ENCODE measurements at regions of chr7 and their contacts with region 1.

Region 1: GRCh38 chr7:156751319-156751718 is 110.7 kb downstream of the RNF32 start:
- DNase-seq: peak; percentile 44
- H3K4me3 Mint-ChIP-seq: peak overlapping the region; percentile 16
- H3K27ac Mint-ChIP-seq: no peak overlapping the region
- H3K4me1 Mint-ChIP-seq: peaks cover 16% of the 10 kb centered on the region
- H3K27me3 Mint-ChIP-seq: no peaks in the 10 kb centered on the region

Region 2: GRCh38 chr7:155961241-155962190 is 789.8 kb before region 1 on chr7:
- intact Hi-C with region 1: loop called (anchors 5 kb)
- DNase-seq: no peak
- H3K4me3 Mint-ChIP-seq: no peak overlapping the region
- H3K27ac Mint-ChIP-seq: no peak overlapping the region
- H3K4me1 Mint-ChIP-seq: peaks cover 20% of the 10 kb centered on the region
- H3K27me3 Mint-ChIP-seq: peaks cover 10% of the 10 kb centered on the region

Region 3: DNA sequence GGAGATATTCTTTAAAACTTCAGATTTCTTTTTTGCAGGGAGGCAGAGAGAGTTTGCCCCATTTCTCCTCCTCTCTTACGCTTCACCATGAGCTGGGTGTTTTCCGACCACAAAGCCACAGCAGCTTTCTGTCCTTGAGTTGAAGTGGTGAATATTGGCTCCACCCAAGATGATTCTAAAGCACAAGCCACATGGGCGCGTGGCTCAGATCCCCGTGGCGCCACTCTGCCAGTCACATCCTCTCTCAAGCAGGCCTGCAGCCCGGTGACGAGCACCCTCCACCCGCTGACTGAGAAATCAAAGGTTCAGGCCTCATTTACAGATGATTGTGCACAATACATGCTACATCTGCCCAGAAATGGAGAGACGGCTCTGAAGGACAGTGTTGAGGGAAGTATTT is 138.4 kb before region 1 on chr7:
- intact Hi-C with region 1: loop called (anchors 2 kb)
- DNase-seq: peak; percentile 82
- H3K4me3 Mint-ChIP-seq: peak overlapping the region; percentile 63
- H3K27ac Mint-ChIP-seq: peak overlapping the region; percentile 25
- H3K4me1 Mint-ChIP-seq: peaks cover 37% of the 10 kb centered on the region
- H3K27me3 Mint-ChIP-seq: peaks cover 56% of the 10 kb centered on the region

Region 4: GRCh38 chr7:156725077-156725476 is 26.2 kb before region 1 on chr7:
- intact Hi-C with region 1: no loop called
- DNase-seq: no peak
- H3K4me3 Mint-ChIP-seq: no peak overlapping the region
- H3K27ac Mint-ChIP-seq: no peak overlapping the region
- H3K4me1 Mint-ChIP-seq: no peaks in the 10 kb centered on the region
- H3K27me3 Mint-ChIP-seq: no peaks in the 10 kb centered on the region

Region 5: DNA sequence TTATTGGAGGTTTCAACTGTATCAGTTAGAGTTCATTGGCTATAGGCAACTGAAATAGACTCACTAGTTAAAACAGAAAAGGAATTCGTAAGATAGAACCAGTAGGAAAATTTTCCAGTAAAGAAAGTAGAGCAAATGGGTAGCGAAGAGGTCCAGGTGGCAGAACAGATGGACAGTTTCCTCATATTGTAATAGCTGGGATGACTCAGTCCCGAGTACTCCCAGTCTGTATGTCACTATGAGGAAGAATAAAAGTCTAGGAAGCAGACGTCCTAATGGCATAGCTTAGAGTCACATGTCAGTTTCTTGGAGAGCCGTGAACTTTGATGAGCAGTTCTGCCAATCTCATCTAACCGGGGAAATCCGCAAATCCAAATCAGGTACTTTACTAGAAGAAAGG is 15.5 kb before region 1 on chr7:
- intact Hi-C with region 1: loop called (anchors 2 kb)
- DNase-seq: no peak
- H3K4me3 Mint-ChIP-seq: no peak overlapping the region
- H3K27ac Mint-ChIP-seq: no peak overlapping the region
- H3K4me1 Mint-ChIP-seq: no peaks in the 10 kb centered on the region
- H3K27me3 Mint-ChIP-seq: no peaks in the 10 kb centered on the region

Region 6: GRCh38 chr7:156773966-156774365 is 22.6 kb after region 1 on chr7:
- intact Hi-C with region 1: loop called (anchors 1 kb)
- DNase-seq: no peak
- H3K4me3 Mint-ChIP-seq: no peak overlapping the region
- H3K27ac Mint-ChIP-seq: no peak overlapping the region
- H3K4me1 Mint-ChIP-seq: peaks cover 53% of the 10 kb centered on the region
- H3K27me3 Mint-ChIP-seq: no peaks in the 10 kb centered on the region